ENCODE measurements at regions of chr10 and their contacts with region 1.

Region 1: DNA sequence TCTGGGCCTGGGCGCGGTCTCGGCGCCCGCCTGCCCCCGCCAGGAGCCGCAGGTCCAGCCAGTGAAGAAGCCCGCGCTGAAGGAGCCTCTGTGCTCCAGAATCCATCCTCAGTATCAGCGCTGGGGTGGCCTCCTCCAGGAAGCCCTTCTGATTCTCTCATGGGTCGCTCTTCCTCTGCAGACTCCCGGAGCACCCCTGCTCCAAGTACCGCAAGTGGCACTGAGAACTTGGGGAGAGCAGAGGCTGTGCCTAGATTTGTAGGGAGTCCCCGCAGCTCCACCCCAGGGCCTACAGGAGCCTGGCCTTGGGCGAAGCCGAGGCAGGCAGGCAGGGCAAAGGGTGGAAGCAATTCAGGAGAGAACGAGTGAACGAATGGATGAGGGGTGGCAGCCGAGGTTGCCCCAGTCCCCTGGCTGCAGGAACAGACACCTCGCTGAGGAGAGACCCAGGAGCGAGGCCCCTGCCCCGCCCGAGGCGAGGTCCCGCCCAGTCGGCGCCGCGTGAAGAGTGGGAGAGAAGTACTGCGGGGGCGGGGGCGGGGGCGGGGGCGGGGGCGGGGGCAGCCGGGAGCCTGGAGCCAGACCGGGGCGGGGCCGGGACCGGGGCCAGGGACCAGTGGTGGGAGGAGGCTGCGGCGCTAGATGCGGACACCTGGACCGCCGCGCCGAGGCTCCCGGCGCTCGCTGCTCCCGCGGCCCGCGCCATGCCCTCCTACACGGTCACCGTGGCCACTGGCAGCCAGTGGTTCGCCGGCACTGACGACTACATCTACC is at the start of gene ALOX5:
- DNase-seq: peak; percentile 48
- H3K4me3 Mint-ChIP-seq: peak within 1 kb of the TSS; percentile 87
- H3K27ac Mint-ChIP-seq: peak within 1 kb of the TSS; percentile 67
- H3K4me1 Mint-ChIP-seq: peaks cover 37% of the 10 kb centered on the region
- H3K27me3 Mint-ChIP-seq: peaks cover 59% of the 10 kb centered on the region
- total RNA-seq, gene ALOX5: 2.9 and 3.1 TPM in 2 replicates

Region 2: DNA sequence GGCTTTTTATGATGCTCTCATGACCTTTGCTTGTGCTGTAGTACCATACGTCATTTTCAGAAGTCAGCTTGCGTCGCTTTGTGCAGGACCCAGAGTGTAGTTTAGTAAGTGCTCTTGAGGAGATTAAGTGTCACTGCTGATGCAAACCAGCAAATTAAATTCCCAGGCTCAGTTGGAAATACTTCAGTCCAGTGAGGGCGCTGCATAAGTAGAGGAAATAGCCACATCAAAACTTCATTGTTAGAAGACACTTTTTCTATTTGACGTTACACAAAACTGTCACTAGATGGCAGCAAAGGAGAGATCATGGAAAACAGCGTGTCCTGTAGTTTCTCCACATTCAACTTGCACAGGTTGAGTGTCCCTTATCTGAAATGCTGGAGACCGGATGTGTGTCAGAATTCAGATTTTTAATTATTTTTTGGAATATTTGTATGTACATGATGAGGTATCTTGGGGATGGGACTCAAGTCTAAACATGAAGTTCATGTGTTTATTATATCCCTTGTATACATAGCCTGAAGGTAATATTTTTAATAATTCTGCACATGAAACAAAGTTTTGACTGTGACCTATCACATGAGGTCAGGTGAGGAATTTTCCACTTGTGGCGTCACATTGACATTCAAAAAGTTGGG is 365.1 kb before region 1 on chr10:
- intact Hi-C with region 1: loop called (anchors 10 kb)
- DNase-seq: no peak
- H3K4me3 Mint-ChIP-seq: no peak overlapping the region
- H3K27ac Mint-ChIP-seq: no peak overlapping the region
- H3K4me1 Mint-ChIP-seq: no peaks in the 10 kb centered on the region
- H3K27me3 Mint-ChIP-seq: no peaks in the 10 kb centered on the region

Region 3: GRCh38 chr10:45353186-45353585 is 20.6 kb before region 1 on chr10:
- intact Hi-C with region 1: loop called (anchors 1 kb)
- DNase-seq: no peak
- H3K4me3 Mint-ChIP-seq: no peak overlapping the region
- H3K27ac Mint-ChIP-seq: peak overlapping the region; percentile 56
- H3K4me1 Mint-ChIP-seq: peaks cover 42% of the 10 kb centered on the region
- H3K27me3 Mint-ChIP-seq: peaks cover 8% of the 10 kb centered on the region

Region 4: GRCh38 chr10:45420453-45421192 is 46.9 kb after region 1 on chr10:
- intact Hi-C with region 1: loop called (anchors 1 kb)
- DNase-seq: peak; percentile 65
- H3K4me3 Mint-ChIP-seq: peak overlapping the region; percentile 96
- H3K27ac Mint-ChIP-seq: peak overlapping the region; percentile 98
- H3K4me1 Mint-ChIP-seq: peaks cover 91% of the 10 kb centered on the region
- H3K27me3 Mint-ChIP-seq: no peaks in the 10 kb centered on the region